ENCODE measurements at regions of chr14 and their contacts with region 1.

Region 1: GRCh38 chr14:90235179-90235976 is 21.0 kb upstream of the PSMC1 start:
- DNase-seq: peak; percentile 33 to 59
- ATAC-seq: peak; percentile 55 to 88 (median 71)
- H3K4me3 ChIP-seq: no peak overlapping the region
- H3K27ac ChIP-seq: no peak overlapping the region
- H3K4me1 ChIP-seq: peaks cover 0 to 7% (median 0%) of the 10 kb centered on the region in 9 donors
- H3K27me3 ChIP-seq: peaks cover 0 to 14% (median 0%) of the 10 kb centered on the region in 7 donors
- CTCF ChIP-seq: peak; percentile 83 to 97 (median 89)

Region 2: GRCh38 chr14:88546621-88547387 is 1688.6 kb before region 1 on chr14:
- intact Hi-C with region 1: no loop called
- DNase-seq: no peak
- ATAC-seq: no peak
- H3K4me3 ChIP-seq: no peak overlapping the region
- H3K27ac ChIP-seq: no peak overlapping the region
- H3K4me1 ChIP-seq: peaks cover 0 to 67% (median 39%) of the 10 kb centered on the region in 9 donors
- H3K27me3 ChIP-seq: peaks cover 0 to 10% (median 0%) of the 10 kb centered on the region in 7 donors
- CTCF ChIP-seq: no peak

Region 3: DNA sequence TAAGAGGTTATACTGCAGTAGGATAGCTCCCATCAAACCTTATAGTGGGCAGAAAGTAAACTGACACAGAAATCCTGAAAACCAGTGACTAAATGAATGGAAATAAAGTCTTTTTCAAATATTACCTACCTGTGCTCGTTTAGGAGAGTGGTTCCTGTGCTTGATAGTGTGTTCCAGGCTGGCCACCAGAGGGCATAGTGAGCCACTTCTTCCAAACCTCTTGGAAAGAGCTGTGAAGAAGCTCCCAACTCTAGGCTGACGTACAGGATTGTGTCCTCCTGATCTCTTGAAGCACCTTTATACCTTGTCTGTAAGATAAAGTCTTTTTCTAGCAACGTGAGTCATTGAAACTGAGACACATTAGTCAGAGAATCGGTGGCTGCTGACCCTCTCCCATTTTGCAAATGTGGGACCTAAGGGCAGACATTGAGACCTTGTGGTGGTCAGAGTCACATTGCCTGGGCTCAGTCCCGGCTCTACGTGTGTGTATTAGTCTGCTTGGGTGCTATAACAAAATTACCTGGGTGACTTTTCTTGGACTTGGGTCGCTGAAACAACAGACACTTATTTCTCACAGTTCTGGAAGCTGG is 262.0 kb before region 1 on chr14:
- intact Hi-C with region 1: loop called in 9 of 10 experiments (anchors 1 to 5 kb)
- DNase-seq: peak; percentile 40 to 52
- ATAC-seq: peak; percentile 66 to 88 (median 82)
- H3K4me3 ChIP-seq: no peak overlapping the region
- H3K27ac ChIP-seq: no peak overlapping the region
- H3K4me1 ChIP-seq: no peaks in the 10 kb centered on the region
- H3K27me3 ChIP-seq: no peaks in the 10 kb centered on the region
- CTCF ChIP-seq: peak; percentile 40 to 90 (median 87)

Region 4: DNA sequence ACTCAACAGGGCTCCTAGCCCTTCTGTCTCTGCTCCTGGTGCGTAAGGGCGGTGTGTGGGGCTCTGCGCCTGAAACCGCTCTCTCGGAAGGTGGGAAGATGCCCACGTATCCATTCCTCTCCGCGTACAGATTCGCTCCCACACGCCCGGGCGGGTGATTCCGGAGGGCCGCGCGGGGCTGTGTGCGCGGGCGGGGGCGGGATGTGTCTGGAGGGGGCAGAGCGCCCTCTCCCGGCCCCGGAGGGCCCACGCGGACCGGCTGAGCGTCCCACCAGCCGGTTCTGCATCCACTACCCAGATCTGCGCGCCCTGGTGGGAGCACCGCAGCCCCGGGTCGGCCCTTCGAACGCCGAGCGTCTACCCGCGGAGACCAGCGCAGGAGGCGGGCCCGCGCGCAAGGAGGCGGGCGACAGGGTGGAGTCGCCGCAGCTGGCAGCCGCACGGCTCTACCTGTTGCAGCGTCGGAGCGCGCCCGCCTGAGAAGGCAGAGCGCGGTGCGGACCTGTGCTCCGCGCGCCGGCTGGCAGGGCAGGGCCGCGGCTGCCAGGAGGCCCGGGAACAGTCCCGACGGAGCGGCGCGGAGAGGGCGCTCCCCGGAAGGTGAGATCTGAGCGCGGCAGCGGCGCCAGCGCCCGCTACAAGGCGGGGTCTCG is 174.9 kb before region 1 on chr14:
- intact Hi-C with region 1: loop called in 2 of 10 experiments (anchors 10 kb)
- DNase-seq: peak in 1 of 2 donors; percentile 61
- ATAC-seq: peak; percentile 72 to 91 (median 82)
- H3K4me3 ChIP-seq: peak overlapping the region; percentile 24 to 64 (median 50)
- H3K27ac ChIP-seq: peak overlapping the region in 3 of 10 donors; percentile 31 to 52 (median 45)
- H3K4me1 ChIP-seq: peaks cover 4 to 41% (median 22%) of the 10 kb centered on the region in 9 donors
- H3K27me3 ChIP-seq: peaks cover 21 to 99% (median 90%) of the 10 kb centered on the region in 7 donors
- CTCF ChIP-seq: peak in 8 of 9 donors; percentile 11 to 68 (median 59)

Region 5: GRCh38 chr14:90109646-90110257 is 125.6 kb before region 1 on chr14:
- intact Hi-C with region 1: loop called in 1 of 10 experiments (anchors 10 kb)
- DNase-seq: no peak
- ATAC-seq: no peak
- H3K4me3 ChIP-seq: no peak overlapping the region
- H3K27ac ChIP-seq: no peak overlapping the region
- H3K4me1 ChIP-seq: no peaks in the 10 kb centered on the region
- H3K27me3 ChIP-seq: peaks cover 0 to 23% (median 0%) of the 10 kb centered on the region in 7 donors
- CTCF ChIP-seq: peak in 2 of 9 donors; percentile 14 to 19

Region 6: DNA sequence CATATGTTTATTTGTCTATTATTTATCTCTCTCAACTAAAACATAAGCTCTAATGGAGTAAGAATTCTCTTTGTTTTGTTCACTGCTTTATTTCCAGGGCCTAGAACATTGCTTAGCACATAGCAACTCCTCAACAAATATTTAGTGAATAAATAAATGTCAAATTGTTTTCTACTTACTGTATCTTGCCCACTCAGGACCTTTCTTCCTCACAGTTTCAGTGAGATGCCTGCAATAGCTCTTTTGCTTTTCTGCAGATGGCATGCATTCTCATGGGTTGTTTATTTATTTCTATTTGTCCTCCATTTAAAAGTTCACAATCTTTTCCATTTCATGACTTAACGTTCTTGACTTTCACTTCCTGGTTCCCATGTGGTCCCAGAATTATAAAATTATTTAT is 675.7 kb after region 1 on chr14:
- intact Hi-C with region 1: no loop called
- DNase-seq: no peak
- ATAC-seq: no peak
- H3K4me3 ChIP-seq: no peak overlapping the region
- H3K27ac ChIP-seq: no peak overlapping the region
- H3K4me1 ChIP-seq: no peaks in the 10 kb centered on the region
- H3K27me3 ChIP-seq: no peaks in the 10 kb centered on the region
- CTCF ChIP-seq: no peak